CD8-positive, alpha-beta T cell (primary cell): ENCODE measurements at regions of chr3 and their contacts with region 1.

Region 1: GRCh38 chr3:48548729-48549705 is 7.6 kb downstream of the PFKFB4 start:
- DNase-seq: peak; percentile 66 to 92 (median 82)
- ATAC-seq: peak; percentile 100
- H3K4me3 ChIP-seq: no peak overlapping the region
- H3K4me3 Mint-ChIP-seq: no peak overlapping the region
- H3K27ac ChIP-seq: no peak overlapping the region
- H3K27ac Mint-ChIP-seq: no peak overlapping the region
- H3K4me1 ChIP-seq: no peaks in the 10 kb centered on the region
- H3K4me1 Mint-ChIP-seq: peaks cover 8% of the 10 kb centered on the region
- H3K27me3 ChIP-seq: no peaks in the 10 kb centered on the region
- H3K27me3 Mint-ChIP-seq: no peaks in the 10 kb centered on the region
- CTCF ChIP-seq: peak; percentile 78

Region 2: GRCh38 chr3:48232734-48233133 is 316.3 kb before region 1 on chr3:
- CTCF ChIA-PET with region 1: interaction called, 3 read pairs
- POLR2A ChIA-PET with region 1: no interaction called
- intact Hi-C with region 1: loop called (anchors 1 kb)
- DNase-seq: peak; percentile 31 to 75 (median 63)
- ATAC-seq: peak; percentile 95
- H3K4me3 ChIP-seq: no peak overlapping the region
- H3K4me3 Mint-ChIP-seq: no peak overlapping the region
- H3K27ac ChIP-seq: no peak overlapping the region
- H3K27ac Mint-ChIP-seq: peak overlapping the region; percentile 11
- H3K4me1 ChIP-seq: no peaks in the 10 kb centered on the region
- H3K4me1 Mint-ChIP-seq: peaks cover 9% of the 10 kb centered on the region
- H3K27me3 ChIP-seq: no peaks in the 10 kb centered on the region
- H3K27me3 Mint-ChIP-seq: no peaks in the 10 kb centered on the region
- CTCF ChIP-seq: peak; percentile 48

Region 3: GRCh38 chr3:48273594-48274211 is 275.3 kb before region 1 on chr3:
- CTCF ChIA-PET with region 1: interaction called, 8 read pairs
- POLR2A ChIA-PET with region 1: no interaction called
- intact Hi-C with region 1: loop called (anchors 1 kb)
- DNase-seq: peak in 8 of 9 experiments; percentile 5 to 78 (median 58)
- ATAC-seq: peak; percentile 50
- H3K4me3 ChIP-seq: no peak overlapping the region
- H3K4me3 Mint-ChIP-seq: no peak overlapping the region
- H3K27ac ChIP-seq: no peak overlapping the region
- H3K27ac Mint-ChIP-seq: no peak overlapping the region
- H3K4me1 ChIP-seq: peaks cover 7% of the 10 kb centered on the region
- H3K4me1 Mint-ChIP-seq: peaks cover 20% of the 10 kb centered on the region
- H3K27me3 ChIP-seq: no peaks in the 10 kb centered on the region
- H3K27me3 Mint-ChIP-seq: no peaks in the 10 kb centered on the region
- CTCF ChIP-seq: peak; percentile 75

Region 4: DNA sequence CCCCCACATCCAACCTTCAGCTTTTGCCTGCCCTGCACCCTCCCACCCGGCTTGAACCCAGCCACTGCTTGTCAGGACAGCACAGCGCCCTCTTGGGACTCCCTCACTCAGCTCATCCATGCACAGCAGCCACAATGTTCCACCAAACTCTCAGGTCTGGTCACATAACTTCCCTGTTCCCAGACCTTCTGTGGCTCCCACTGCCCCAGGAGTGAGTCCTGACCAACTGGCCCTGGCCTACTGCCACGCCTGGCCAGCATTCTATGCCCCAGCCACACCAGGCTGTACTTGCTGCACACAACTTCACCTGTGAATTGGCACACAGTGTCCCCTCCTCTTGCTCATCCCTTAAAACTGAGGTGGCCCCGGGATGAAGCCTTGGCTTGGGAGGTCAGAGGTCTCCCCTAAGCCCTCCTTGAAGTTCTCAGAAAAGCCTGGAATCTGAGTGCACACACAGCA is 140.2 kb before region 1 on chr3:
- CTCF ChIA-PET with region 1: interaction called, 175 read pairs
- POLR2A ChIA-PET with region 1: no interaction called
- intact Hi-C with region 1: no loop called
- DNase-seq: no peak
- ATAC-seq: no peak
- H3K4me3 ChIP-seq: no peak overlapping the region
- H3K4me3 Mint-ChIP-seq: no peak overlapping the region
- H3K27ac ChIP-seq: no peak overlapping the region
- H3K27ac Mint-ChIP-seq: no peak overlapping the region
- H3K4me1 ChIP-seq: no peaks in the 10 kb centered on the region
- H3K4me1 Mint-ChIP-seq: no peaks in the 10 kb centered on the region
- H3K27me3 ChIP-seq: no peaks in the 10 kb centered on the region
- H3K27me3 Mint-ChIP-seq: no peaks in the 10 kb centered on the region
- CTCF ChIP-seq: no peak

Region 5: GRCh38 chr3:48472915-48473616 is 76.0 kb before region 1 on chr3:
- CTCF ChIA-PET with region 1: interaction called, 15 read pairs
- POLR2A ChIA-PET with region 1: no interaction called
- intact Hi-C with region 1: no loop called
- DNase-seq: peak; percentile 85 to 99 (median 92)
- ATAC-seq: peak; percentile 87
- H3K4me3 ChIP-seq: peak overlapping the region; percentile 62 to 65
- H3K4me3 Mint-ChIP-seq: peak overlapping the region; percentile 90
- H3K27ac ChIP-seq: peak overlapping the region; percentile 82 to 92
- H3K27ac Mint-ChIP-seq: peak overlapping the region; percentile 99
- H3K4me1 ChIP-seq: peaks cover 55% of the 10 kb centered on the region
- H3K4me1 Mint-ChIP-seq: peaks cover 56% of the 10 kb centered on the region
- H3K27me3 ChIP-seq: no peaks in the 10 kb centered on the region
- H3K27me3 Mint-ChIP-seq: no peaks in the 10 kb centered on the region
- CTCF ChIP-seq: no peak

Region 6: DNA sequence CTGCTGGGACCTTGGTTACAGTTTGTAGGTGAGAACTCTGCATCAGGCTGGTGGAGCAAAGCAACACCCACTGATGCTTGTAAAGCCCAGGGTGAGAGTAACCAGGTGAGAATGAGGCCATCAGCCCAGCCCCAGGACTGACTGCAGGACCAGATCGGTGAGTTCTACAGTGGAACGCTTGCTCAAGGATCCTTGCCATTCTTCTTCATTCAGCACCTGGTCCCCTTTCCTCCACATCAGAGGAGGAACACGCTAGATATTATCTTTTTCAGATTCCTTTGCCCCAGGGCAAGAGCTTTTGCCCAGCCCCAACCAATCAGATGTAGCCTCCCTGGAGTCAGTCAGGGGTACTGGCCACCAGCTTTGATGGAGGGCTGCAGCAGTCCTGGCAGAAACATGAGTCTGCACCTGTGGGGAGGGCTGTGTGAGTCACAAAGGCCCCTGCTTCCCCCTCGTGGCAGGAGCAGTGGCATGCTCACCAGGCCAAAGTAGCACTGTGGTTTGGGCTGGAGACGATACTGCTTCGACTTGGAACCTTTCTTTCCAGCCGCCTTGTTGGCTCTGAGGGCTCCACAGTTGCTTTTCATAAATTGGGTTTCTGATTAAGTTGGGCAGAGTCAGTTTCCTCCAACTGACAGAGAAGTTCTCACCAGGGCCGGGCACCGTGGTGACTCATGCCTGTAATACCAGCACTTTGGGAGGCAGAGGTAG is 41.5 kb before region 1 on chr3:
- CTCF ChIA-PET with region 1: interaction called, 197 read pairs
- POLR2A ChIA-PET with region 1: no interaction called
- intact Hi-C with region 1: loop called in 1 of 2 experiments (anchors 2 kb)
- DNase-seq: peak; percentile 53 to 88 (median 80)
- ATAC-seq: peak; percentile 87
- H3K4me3 ChIP-seq: no peak overlapping the region
- H3K4me3 Mint-ChIP-seq: peak overlapping the region; percentile 47
- H3K27ac ChIP-seq: peak overlapping the region in 1 of 2 experiments; percentile 25
- H3K27ac Mint-ChIP-seq: peak overlapping the region; percentile 72
- H3K4me1 ChIP-seq: peaks cover 36% of the 10 kb centered on the region
- H3K4me1 Mint-ChIP-seq: peaks cover 37% of the 10 kb centered on the region
- H3K27me3 ChIP-seq: no peaks in the 10 kb centered on the region
- H3K27me3 Mint-ChIP-seq: no peaks in the 10 kb centered on the region
- CTCF ChIP-seq: peak; percentile 72

Region 7: GRCh38 chr3:48528754-48529153 is 20.3 kb before region 1 on chr3:
- CTCF ChIA-PET with region 1: interaction called, 13 read pairs
- POLR2A ChIA-PET with region 1: interaction called, 3 read pairs
- intact Hi-C with region 1: no loop called
- DNase-seq: no peak
- ATAC-seq: no peak
- H3K4me3 ChIP-seq: no peak overlapping the region
- H3K4me3 Mint-ChIP-seq: no peak overlapping the region
- H3K27ac ChIP-seq: no peak overlapping the region
- H3K27ac Mint-ChIP-seq: no peak overlapping the region
- H3K4me1 ChIP-seq: no peaks in the 10 kb centered on the region
- H3K4me1 Mint-ChIP-seq: no peaks in the 10 kb centered on the region
- H3K27me3 ChIP-seq: no peaks in the 10 kb centered on the region
- H3K27me3 Mint-ChIP-seq: no peaks in the 10 kb centered on the region
- CTCF ChIP-seq: no peak

Region 8: GRCh38 chr3:48727511-48727910 is 178.5 kb after region 1 on chr3:
- CTCF ChIA-PET with region 1: no interaction called
- POLR2A ChIA-PET with region 1: no interaction called
- intact Hi-C with region 1: no loop called
- DNase-seq: no peak
- ATAC-seq: no peak
- H3K4me3 ChIP-seq: no peak overlapping the region
- H3K4me3 Mint-ChIP-seq: no peak overlapping the region
- H3K27ac ChIP-seq: no peak overlapping the region
- H3K27ac Mint-ChIP-seq: no peak overlapping the region
- H3K4me1 ChIP-seq: no peaks in the 10 kb centered on the region
- H3K4me1 Mint-ChIP-seq: no peaks in the 10 kb centered on the region
- H3K27me3 ChIP-seq: no peaks in the 10 kb centered on the region
- H3K27me3 Mint-ChIP-seq: no peaks in the 10 kb centered on the region
- CTCF ChIP-seq: no peak